K562 (cell line): ENCODE measurements at regions of chr19 and their contacts with region 1.

Region 1: GRCh38 chr19:19040417-19040816 is 7.0 kb downstream of the ARMC6 start:
- DNase-seq: no peak
- ATAC-seq: no peak
- H3K4me3 ChIP-seq: no peak overlapping the region
- H3K27ac ChIP-seq: no peak overlapping the region
- H3K4me1 ChIP-seq: peaks cover 0 to 9% of the 10 kb centered on the region in 2 experiments; a peak in 3 of 5 replicates
- H3K27me3 ChIP-seq: no peaks in the 10 kb centered on the region
- CTCF ChIP-seq: no peak
- EP300 ChIP-seq: no peak
- POLR2A ChIP-seq: no peak
- RAD21 ChIP-seq: no peak

Region 2: DNA sequence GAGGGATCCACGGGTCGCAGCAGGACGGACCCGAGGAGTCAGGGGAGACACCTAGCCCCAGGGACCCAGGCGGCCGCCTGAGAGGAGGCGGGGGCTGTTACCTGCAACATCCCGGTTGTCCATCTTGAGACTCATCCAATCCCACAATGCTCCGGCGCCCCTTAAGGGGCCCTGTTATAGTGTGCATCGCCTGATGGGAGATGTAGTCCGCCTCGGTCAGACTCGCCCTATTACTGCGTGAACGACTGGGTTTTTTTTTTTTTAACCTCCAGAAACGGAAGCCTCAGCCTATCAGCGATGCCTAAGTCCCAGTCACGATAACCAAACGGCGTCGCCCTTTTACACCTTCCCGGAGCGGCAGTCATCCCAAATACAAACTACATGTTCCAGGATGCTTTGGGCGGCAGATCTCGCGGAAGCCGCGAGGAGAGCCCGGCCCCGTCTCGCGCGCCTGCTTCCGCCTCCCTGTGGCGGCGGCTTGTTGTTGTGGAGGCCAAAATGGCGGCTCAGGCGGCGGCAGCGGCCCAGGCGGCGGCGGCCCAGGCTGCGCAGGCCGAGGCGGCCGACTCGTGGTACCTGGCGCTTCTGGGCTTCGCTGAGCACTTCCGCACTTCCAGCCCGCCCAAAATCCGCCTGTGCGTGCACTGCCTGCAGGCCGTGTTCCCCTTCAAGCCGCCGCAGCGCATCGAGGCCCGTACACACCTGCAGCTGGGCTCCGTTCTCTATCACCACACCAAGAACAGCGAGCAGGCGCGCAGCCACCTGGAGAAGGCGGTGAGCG is 280.1 kb after region 1 on chr19 and contains the starts of genes MAU2 and SUGP1:
- CTCF ChIA-PET with region 1: no interaction called
- POLR2A ChIA-PET with region 1: no interaction called
- in situ Hi-C with region 1: loop called (anchors 10 kb)
- intact Hi-C with region 1: no loop called
- DNase-seq: peak; percentile 90 to 94 (median 92)
- ATAC-seq: peak; percentile 96
- H3K4me3 ChIP-seq: peak within 1 kb of the TSS; percentile 95
- H3K27ac ChIP-seq: peak within 1 kb of the TSS; percentile 100
- H3K4me1 ChIP-seq: peaks cover 6 to 22% of the 10 kb centered on the region in 2 experiments; a peak in 4 of 5 replicates
- H3K27me3 ChIP-seq: no peaks in the 10 kb centered on the region
- CTCF ChIP-seq: peak; percentile 30 to 39 (median 32); a peak in 3 of 6 replicates
- EP300 ChIP-seq: no peak; the same call in 1 of the 2 replicates
- POLR2A ChIP-seq: peak; percentile 84
- RAD21 ChIP-seq: peak in 1 of 2 experiments; percentile 26; a peak in 1 of 4 replicates
- polyA plus RNA-seq, gene MAU2: 1.2 to 1.4 TPM
- polyA plus RNA-seq, gene SUGP1: 1.0 to 1.9 TPM